Astrocyte of the spinal cord (primary cell): ENCODE measurements at regions of chr20 and their contacts with region 1.

Region 1: DNA sequence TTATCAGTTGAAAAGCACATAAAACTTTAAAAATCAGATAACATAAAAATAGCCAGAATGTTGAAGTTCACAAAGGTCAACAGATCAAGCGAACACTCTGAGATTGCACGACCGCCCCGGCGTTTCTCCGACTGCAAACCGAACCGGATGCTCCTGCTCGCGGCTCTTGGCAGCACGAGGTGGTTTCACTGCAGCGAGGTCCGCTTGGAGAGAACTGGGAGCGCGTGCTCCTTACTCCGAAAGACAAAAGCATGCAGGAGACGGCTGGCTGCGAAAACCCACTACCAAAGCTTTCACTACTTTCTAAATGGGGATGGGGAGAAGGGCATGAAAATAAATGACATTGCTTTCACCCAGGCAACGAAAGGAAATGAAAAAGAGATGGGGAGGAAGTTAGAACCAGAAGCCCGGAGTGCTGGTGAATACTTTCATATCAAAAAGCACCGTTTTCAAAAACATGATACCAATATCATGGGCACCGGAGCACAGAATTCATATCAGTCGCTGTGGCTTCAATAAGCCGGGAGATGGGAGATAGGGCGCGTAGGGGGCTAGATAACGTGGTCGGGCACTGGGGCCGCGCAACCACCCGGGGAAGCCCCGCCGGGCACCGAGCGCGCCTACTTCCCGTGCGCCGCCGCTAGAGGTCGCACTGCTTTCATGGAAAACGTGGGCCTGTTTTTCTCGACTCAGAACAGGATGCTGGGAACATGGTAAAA is 8.3 kb upstream of the ANKRD60 start:
- DNase-seq: peak; percentile 67
- H3K4me3 ChIP-seq: peak overlapping the region; percentile 40
- CTCF ChIP-seq: peak; percentile 92

Region 2: GRCh38 chr20:58094160-58094559 is 142.6 kb before region 1 on chr20:
- in situ Hi-C with region 1: no loop called
- DNase-seq: no peak
- H3K4me3 ChIP-seq: no peak overlapping the region
- CTCF ChIP-seq: no peak

Region 3: DNA sequence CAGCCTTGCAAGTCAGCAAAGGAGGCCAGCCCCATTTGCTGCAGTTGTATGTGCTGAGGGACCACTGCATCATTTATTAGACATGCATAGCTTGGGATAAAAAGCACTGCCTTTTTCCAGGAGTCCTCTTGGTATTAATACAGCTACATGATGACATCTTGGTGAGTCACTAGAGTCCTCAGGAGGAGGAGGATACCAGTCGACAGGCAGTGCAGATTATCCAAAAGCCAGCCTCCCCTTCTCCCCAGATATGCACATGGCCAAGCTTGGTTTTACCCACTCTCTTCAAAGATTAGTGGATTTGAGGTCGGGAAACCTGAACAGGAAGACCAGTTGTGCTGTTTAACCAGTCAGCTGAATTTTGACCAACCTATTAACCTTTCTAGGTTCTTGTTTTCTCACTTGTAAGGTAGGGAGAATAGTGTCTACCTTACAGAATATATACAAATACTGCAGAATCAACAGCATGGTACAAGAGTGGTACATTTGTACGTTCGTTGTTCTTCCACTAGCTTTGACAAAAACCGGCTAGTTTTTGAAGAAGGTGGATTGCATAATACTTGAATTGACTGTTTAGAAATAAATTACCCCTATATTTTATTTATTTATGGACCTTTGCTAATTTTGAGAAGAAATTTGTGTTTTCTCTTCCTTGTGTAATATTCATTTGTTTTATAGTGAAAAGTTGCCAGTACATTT is 184.2 kb after region 1 on chr20:
- in situ Hi-C with region 1: no loop called
- DNase-seq: peak; percentile 58
- H3K4me3 ChIP-seq: no peak overlapping the region
- CTCF ChIP-seq: no peak

Region 4: GRCh38 chr20:58650776-58651558 is 414.2 kb after region 1 on chr20 and contains the start of gene STX16:
- in situ Hi-C with region 1: loop called (anchors 25 kb)
- DNase-seq: peak; percentile 93
- H3K4me3 ChIP-seq: peak within 1 kb of the TSS; percentile 87
- CTCF ChIP-seq: peak; percentile 51

Region 5: DNA sequence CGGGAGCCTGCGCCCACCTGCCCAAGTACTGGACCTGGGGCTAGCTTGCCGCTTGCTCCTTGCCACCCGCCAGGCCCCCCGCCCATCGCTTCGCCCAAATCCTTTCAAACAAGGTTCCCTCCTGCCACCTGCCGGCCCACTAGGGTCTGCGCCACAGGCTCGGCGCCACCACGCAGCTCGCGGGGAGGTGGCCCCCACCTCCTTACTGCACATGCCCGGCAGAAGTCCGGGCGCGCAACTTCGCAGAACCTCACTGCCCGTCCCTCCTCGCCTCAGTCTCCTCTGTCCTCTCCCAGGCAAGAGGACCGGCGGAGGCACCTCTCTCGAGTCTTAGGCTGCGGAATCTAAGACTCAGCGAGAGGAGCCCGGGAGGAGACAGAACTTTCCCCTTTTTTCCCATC is 602.7 kb after region 1 on chr20:
- in situ Hi-C with region 1: loop called (anchors 25 kb)
- DNase-seq: peak; percentile 26
- H3K4me3 ChIP-seq: no peak overlapping the region
- CTCF ChIP-seq: peak; percentile 46